ENCODE measurements at regions of chr5 and their contacts with region 1.

Region 1: GRCh38 chr5:119063579-119064379 is 7.1 kb upstream of the DMXL1 start:
- DNase-seq: peak in 1 of 4 donors; percentile 6
- ATAC-seq: peak; percentile 71
- H3K4me3 ChIP-seq: no peak overlapping the region
- H3K27ac ChIP-seq: peak overlapping the region in 1 of 4 donors; percentile 3
- H3K4me1 ChIP-seq: peaks cover 7% of the 10 kb centered on the region
- H3K27me3 ChIP-seq: no peaks in the 10 kb centered on the region
- CTCF ChIP-seq: no peak
- POLR2A ChIP-seq: no peak

Region 2: GRCh38 chr5:118616281-118616680 is 447.5 kb before region 1 on chr5:
- intact Hi-C with region 1: no loop called
- DNase-seq: no peak
- ATAC-seq: no peak
- H3K4me3 ChIP-seq: no peak overlapping the region
- H3K27ac ChIP-seq: no peak overlapping the region
- H3K4me1 ChIP-seq: peaks cover 10% of the 10 kb centered on the region
- H3K27me3 ChIP-seq: no peaks in the 10 kb centered on the region
- CTCF ChIP-seq: no peak
- POLR2A ChIP-seq: no peak

Region 3: GRCh38 chr5:119009131-119009530 is 54.6 kb before region 1 on chr5:
- intact Hi-C with region 1: loop called (anchors 10 kb)
- DNase-seq: peak in 3 of 4 donors; percentile 43 to 50 (median 48)
- ATAC-seq: peak; percentile 84
- H3K4me3 ChIP-seq: no peak overlapping the region
- H3K27ac ChIP-seq: peak overlapping the region; percentile 13 to 51 (median 25)
- H3K4me1 ChIP-seq: peaks cover 30% of the 10 kb centered on the region
- H3K27me3 ChIP-seq: no peaks in the 10 kb centered on the region
- CTCF ChIP-seq: no peak
- POLR2A ChIP-seq: no peak

Measured in body of pancreas (tissue), 4 donors.